ENCODE measurements at regions of chr1 and their contacts with region 1.

Region 1: DNA sequence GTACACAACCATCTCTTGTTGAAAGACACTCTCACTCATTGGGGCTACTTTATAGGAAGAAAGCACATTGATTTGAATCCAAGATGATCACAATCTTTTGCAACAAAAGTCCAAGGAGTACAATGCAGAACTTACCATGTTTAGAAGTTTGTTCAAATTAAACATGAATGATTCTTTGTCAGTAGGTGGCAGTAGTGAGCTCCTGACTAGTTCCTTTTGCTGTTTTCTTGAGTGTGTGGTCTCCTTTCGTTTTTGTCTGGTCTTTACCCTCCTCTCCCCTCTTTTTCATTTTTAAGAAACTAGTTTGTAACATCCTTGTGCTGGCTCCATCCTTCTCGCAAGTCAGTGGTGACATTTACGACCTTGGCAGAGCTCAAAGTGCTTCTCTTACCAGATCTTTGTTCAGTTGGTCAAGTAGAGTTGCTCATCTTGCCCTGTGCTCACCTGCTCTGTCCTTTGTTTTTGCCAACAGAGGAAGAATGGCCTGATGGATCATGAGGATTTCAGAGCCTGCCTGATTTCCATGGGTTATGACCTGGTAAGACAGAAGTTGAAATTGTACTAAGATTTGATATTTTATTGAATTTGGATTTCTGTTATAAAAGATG is 35.7 kb upstream of the MTR start:
- DNase-seq: no peak
- ATAC-seq: no peak

Region 2: GRCh38 chr1:236619398-236619797 is 140.0 kb before region 1 on chr1:
- intact Hi-C with region 1: loop called in 1 of 2 experiments (anchors 10 kb)
- DNase-seq: no peak
- ATAC-seq: no peak

Region 3: DNA sequence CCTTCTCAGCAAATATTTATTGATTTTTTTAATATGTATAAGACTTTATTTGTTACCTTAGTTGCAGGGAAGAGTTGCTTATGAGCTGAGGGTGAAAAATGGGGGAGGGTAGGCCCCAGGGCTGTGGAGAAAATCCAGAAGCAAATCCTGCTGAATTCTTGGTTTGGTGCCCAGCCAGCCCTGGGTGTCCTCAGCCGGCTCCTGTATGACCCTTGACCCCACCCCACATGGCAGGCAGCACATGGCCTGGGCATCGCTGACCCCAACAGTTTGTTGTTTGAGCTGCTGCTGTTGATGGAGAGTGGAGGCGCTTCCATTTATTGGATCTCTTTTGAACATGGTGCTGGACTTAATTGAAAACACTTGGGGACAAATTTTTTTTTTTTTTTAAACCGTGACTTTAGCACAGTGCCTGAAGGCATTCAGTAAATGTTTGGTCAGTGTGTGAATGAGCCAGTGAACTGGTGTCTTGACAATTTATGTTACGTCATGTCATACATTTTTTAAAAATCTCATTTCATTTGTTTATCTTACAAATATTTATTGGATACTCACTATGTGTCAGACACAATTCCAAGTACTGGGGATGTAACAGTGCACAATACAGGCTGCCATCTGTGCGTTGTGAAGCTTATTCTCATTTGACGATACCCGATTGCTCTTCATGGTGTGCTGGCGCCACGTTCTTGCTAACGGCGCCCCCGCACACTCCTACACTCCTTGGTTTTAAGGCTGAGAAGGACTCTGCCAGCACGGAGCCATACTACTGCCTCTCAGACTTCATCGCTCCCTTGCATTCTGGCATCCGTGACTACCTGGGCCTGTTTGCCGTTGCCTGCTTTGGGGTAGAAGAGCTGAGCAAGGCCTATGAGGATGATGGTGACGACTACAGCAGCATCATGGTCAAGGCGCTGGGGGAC is 134.5 kb after region 1 on chr1:
- intact Hi-C with region 1: no loop called
- DNase-seq: no peak
- ATAC-seq: no peak

Region 4: GRCh38 chr1:237386362-237387143 is 627.2 kb after region 1 on chr1:
- intact Hi-C with region 1: loop called in 1 of 2 experiments (anchors 10 kb)
- DNase-seq: no peak
- ATAC-seq: no peak

Measured in left cardiac atrium (tissue), 4 donors.